Caco-2 (cell line): ENCODE measurements at regions of chr20 and their contacts with region 1.

Region 1: DNA sequence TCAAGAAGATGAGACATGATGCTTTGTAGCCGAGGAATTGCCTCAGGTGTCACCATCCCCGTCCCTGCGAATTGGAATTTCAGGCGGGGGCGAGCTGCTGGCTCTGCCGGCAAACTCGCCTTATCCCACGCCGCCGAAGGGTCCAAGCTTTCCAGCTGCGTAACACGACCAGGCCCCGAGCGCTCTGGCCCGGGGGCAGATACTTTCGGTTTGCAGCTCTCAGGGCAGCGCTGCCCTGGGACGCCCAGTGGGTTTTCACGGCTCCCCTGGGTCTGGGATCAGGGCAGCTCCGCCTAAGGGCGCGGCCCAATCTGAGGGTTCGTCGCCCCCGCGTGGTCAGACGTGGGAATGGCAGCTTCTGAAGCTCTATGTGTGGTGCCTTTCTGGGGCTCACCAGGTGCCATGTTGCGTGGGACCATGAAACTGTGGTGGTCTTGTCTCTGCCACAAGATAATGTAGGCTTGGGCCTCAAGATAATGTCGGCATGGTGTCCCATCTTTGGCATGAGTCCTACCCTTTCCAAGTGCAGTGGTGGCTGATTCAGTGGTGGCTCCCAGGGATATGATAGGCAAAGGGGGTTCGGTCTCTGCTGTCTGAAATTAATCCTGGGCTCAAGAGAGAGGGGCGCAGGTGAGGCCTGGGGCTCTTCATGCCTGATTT is 20.9 kb downstream of the PIGT start:
- DNase-seq: peak; percentile 95 to 98
- H3K4me3 ChIP-seq: peak overlapping the region; percentile 43
- H3K4me3 Mint-ChIP-seq: peak overlapping the region; percentile 84
- H3K27ac Mint-ChIP-seq: peak overlapping the region; percentile 71
- H3K4me1 ChIP-seq: peaks cover 25% of the 10 kb centered on the region
- H3K4me1 Mint-ChIP-seq: peaks cover 34% of the 10 kb centered on the region
- H3K27me3 ChIP-seq: no peaks in the 10 kb centered on the region
- H3K27me3 Mint-ChIP-seq: no peaks in the 10 kb centered on the region
- CTCF ChIP-seq: peak; percentile 99 to 100

Region 2: DNA sequence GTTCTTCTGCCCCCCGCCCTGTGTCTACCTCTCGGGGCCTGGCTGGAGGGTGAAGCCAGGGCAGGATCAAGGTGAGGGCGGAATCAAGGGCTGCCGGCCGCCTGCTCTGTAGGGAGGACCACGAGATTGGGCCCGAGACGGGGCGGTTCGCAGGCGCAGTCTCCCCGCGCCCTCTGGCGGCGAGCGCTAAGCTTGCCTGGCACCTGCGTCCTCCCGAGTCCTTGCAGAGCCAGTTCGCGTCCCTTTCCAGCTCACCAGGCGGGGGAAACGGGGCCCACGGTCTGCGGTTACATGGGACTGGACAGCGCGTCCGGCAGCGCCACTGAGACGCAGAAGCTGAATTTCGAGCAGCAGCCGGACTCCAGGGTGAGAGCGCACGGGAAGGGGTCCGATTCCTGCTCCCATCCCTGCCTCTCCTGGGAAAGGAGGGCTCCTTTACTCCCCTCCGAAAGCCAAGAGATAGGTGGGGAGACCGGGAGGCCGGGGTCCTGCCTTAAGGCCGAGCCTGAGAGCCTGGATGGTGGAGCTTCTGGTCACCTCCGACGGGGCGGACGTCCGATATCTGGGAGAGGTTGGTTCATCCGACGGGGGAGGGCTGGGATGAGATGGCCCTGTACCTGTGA is 125.2 kb before region 1 on chr20:
- CTCF ChIA-PET with region 1: interaction called, 15 read pairs
- POLR2A ChIA-PET with region 1: no interaction called
- intact Hi-C with region 1: no loop called
- DNase-seq: peak; percentile 81 to 84
- H3K4me3 ChIP-seq: no peak overlapping the region
- H3K4me3 Mint-ChIP-seq: no peak overlapping the region
- H3K27ac Mint-ChIP-seq: no peak overlapping the region
- H3K4me1 ChIP-seq: no peaks in the 10 kb centered on the region
- H3K4me1 Mint-ChIP-seq: peaks cover 8% of the 10 kb centered on the region
- H3K27me3 ChIP-seq: no peaks in the 10 kb centered on the region; the same call in 1 of the 2 replicates
- H3K27me3 Mint-ChIP-seq: peaks cover 3% of the 10 kb centered on the region
- CTCF ChIP-seq: peak; percentile 91 to 94

Region 3: DNA sequence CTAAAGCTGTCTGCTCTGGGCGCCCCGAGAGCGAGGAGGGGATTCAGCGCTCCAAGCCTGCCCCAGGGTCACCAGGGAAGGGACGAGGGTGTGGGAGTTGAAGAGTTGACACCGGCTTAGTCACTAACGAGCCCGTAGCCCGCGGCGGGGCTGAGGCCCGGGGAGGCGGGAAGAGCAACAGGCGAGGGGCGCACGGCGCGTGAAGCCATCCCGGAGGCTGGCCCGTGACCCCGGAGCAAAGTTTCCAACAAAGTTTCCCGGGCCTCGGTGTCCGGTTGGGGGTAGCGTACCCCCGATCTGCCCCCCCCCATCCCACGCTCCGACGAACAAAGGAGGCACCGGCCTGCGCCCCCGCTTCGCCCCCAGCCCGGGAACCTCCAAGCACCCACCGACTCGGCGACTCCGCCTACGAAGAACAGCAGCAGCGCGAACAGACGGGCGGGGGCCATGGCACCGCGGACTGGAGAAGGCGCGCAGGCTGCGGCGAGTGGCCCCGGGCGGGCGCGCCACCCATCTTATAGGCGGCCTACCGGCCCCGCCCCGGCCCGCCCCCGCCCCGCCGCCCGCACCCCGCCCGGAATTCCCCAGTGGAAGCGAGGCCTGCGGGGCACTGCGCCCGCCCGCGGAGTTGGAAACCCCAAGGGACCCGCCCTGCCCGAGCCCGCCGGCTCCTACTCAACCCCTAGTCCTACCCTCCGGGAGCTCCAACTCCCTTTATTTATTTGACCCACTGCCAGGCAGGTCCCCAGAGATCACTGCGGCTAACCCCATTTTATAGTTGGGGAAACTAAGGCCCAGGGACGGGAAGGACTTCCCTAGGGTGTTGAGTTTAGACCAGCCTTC is 88.7 kb before region 1 on chr20 and contains the start of gene SDC4:
- CTCF ChIA-PET with region 1: interaction called, 26 read pairs
- POLR2A ChIA-PET with region 1: interaction called, 7 read pairs
- intact Hi-C with region 1: no loop called
- DNase-seq: peak; percentile 83 to 94
- H3K4me3 ChIP-seq: peak within 1 kb of the TSS; percentile 88
- H3K4me3 Mint-ChIP-seq: peak within 1 kb of the TSS; percentile 97
- H3K27ac Mint-ChIP-seq: peak within 1 kb of the TSS; percentile 77
- H3K4me1 ChIP-seq: peaks cover 45% of the 10 kb centered on the region
- H3K4me1 Mint-ChIP-seq: peaks cover 47% of the 10 kb centered on the region
- H3K27me3 ChIP-seq: no peaks in the 10 kb centered on the region
- H3K27me3 Mint-ChIP-seq: no peaks in the 10 kb centered on the region
- CTCF ChIP-seq: no peak
- total RNA-seq, gene SDC4: 227 and 242 TPM in 2 replicates

Region 4: DNA sequence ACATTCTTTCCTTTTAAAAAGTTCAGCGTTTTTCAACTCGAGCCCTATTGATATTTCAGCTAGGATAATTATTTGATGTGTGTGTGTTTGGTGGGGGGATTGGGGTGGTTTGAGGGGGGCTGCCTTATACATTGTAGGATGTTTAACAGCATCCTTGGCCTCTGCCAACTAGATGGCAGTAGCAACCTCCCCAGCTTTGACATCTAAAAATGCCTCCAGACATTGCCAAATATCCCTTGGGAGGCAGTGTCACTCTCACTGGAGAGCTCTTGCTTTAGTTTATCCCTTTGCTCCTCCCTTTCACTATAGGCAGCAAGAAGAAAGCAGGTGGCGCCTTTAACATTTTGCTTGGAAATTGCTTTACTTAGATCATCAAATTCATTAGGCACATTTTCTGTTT is 44.1 kb before region 1 on chr20:
- CTCF ChIA-PET with region 1: interaction called, 23 read pairs
- POLR2A ChIA-PET with region 1: no interaction called
- intact Hi-C with region 1: no loop called
- DNase-seq: peak in 1 of 2 experiments; percentile 46
- H3K4me3 ChIP-seq: no peak overlapping the region
- H3K4me3 Mint-ChIP-seq: no peak overlapping the region
- H3K27ac Mint-ChIP-seq: no peak overlapping the region
- H3K4me1 ChIP-seq: no peaks in the 10 kb centered on the region
- H3K4me1 Mint-ChIP-seq: no peaks in the 10 kb centered on the region
- H3K27me3 ChIP-seq: no peaks in the 10 kb centered on the region
- H3K27me3 Mint-ChIP-seq: peaks cover 2% of the 10 kb centered on the region
- CTCF ChIP-seq: no peak

Region 5: GRCh38 chr20:45450097-45450818 is 13.4 kb after region 1 on chr20:
- CTCF ChIA-PET with region 1: interaction called, 28 read pairs
- POLR2A ChIA-PET with region 1: interaction called, 3 read pairs
- intact Hi-C with region 1: loop called (anchors 1 kb)
- DNase-seq: peak in 1 of 2 experiments; percentile 61
- H3K4me3 ChIP-seq: no peak overlapping the region
- H3K4me3 Mint-ChIP-seq: no peak overlapping the region
- H3K27ac Mint-ChIP-seq: no peak overlapping the region
- H3K4me1 ChIP-seq: peaks cover 14% of the 10 kb centered on the region
- H3K4me1 Mint-ChIP-seq: peaks cover 12% of the 10 kb centered on the region
- H3K27me3 ChIP-seq: no peaks in the 10 kb centered on the region
- H3K27me3 Mint-ChIP-seq: no peaks in the 10 kb centered on the region
- CTCF ChIP-seq: peak; percentile 64 to 82